Activated CD4-positive, alpha-beta memory T cell treated with anti-CD3 and anti-CD28 coated beads for 36 hours (primary cell): ENCODE measurements at regions of chr11 and their contacts with region 1.

Region 1: GRCh38 chr11:119101759-119102423 is at the start of gene DPAGT1:
- DNase-seq: peak; percentile 92
- H3K4me3 Mint-ChIP-seq: peak within 1 kb of the TSS; percentile 92
- H3K27ac Mint-ChIP-seq: peak within 1 kb of the TSS; percentile 92
- H3K4me1 Mint-ChIP-seq: peaks cover 33% of the 10 kb centered on the region
- H3K27me3 Mint-ChIP-seq: no peaks in the 10 kb centered on the region
- total RNA-seq, gene DPAGT1: 64.4 to 66.9 TPM

Region 2: DNA sequence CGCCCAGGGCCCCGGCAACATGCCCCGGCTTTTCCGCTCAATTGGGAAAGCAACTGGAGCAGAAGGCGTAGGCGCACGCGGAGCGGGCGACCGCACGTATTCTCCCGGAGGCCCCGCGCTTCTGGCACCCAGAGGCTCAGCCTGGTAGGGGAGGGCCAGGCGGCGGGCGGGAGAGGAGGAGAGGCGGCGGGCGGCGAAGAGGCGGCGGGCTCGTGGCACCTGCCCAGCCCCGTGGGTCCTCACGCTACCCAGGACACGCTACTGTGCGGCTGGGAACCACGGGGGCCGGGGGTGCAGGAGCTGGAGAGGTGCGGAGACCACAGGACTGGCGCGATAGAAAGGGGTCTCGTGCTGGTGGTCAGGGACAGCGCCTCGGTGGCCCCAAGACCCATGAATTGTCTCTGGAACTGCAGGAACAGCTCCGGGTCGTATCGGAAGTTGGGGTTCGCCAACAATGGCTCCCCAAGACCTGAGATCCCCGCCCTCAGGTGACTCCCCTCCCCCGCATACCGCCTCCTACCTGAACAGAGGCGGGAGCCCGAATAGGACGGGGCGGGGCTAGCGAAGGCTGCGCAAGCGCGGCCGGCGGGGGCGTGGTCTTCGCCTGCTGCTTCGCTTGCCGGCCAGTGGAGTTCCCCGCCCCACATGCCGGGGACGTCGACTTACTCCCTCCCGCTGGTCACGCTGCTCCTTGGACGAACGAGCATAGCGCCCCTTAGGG is 71.4 kb before region 1 on chr11 and contains the start of gene SLC37A4:
- CTCF ChIA-PET with region 1: interaction called, 3 read pairs
- POLR2A ChIA-PET with region 1: no interaction called
- intact Hi-C with region 1: loop called (anchors 2 kb)
- DNase-seq: peak; percentile 99
- H3K4me3 Mint-ChIP-seq: peak within 1 kb of the TSS; percentile 82
- H3K27ac Mint-ChIP-seq: peak within 1 kb of the TSS; percentile 89
- H3K4me1 Mint-ChIP-seq: peaks cover 18% of the 10 kb centered on the region
- H3K27me3 Mint-ChIP-seq: no peaks in the 10 kb centered on the region
- total RNA-seq, gene SLC37A4: 33.4 to 37.0 TPM

Region 3: GRCh38 chr11:119057000-119057769 is 44.7 kb before region 1 on chr11 and contains the start of gene HYOU1:
- CTCF ChIA-PET with region 1: no interaction called
- POLR2A ChIA-PET with region 1: interaction called, 7 read pairs
- intact Hi-C with region 1: loop called (anchors 1 kb)
- DNase-seq: peak; percentile 99
- H3K4me3 Mint-ChIP-seq: peak within 1 kb of the TSS; percentile 96
- H3K27ac Mint-ChIP-seq: peak within 1 kb of the TSS; percentile 94
- H3K4me1 Mint-ChIP-seq: peaks cover 38% of the 10 kb centered on the region
- H3K27me3 Mint-ChIP-seq: no peaks in the 10 kb centered on the region
- total RNA-seq, gene HYOU1: 127 to 136 TPM

Region 4: DNA sequence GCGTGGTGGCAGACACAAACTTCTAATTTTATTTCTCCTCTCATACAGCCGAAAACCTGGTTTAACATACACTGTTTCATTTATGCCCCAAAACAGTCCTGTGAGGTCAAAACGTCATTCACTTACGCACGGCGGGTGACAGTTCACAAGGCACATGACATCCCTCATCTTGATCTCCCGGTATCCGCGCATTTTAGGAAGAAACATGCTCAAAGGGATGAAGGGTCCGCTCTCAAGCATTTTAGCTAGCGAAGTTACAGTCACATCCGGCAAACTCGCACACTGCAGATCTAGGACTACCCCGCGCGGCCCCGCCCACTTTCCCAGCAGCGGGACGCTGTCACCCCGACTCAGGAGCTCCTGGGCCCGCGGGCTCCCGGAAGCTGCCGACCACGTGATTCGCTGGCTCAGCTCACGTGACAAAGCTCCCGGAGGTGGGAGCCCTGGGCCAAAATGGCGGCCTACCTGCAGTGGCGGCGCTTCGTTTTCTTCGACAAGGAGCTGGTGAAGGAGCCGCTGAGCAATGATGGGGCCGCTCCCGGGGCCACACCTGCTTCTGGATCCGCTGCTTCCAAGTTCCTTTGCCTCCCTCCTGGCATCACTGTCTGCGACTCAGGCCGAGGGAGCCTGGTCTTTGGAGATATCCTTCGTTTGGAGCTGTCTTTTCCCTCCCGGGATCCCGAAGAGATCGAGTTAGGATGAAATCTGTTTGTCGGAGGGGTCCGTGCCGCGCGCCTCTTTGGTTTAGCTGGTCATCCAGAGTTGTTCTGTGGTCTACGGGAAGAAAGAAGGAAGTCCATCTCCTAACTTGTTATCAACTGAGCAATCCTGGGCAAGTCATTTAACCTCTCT is 34.3 kb before region 1 on chr11 and contains the start of gene VPS11:
- CTCF ChIA-PET with region 1: interaction called, 6 read pairs
- POLR2A ChIA-PET with region 1: interaction called, 15 read pairs
- intact Hi-C with region 1: loop called (anchors 1 kb)
- DNase-seq: peak; percentile 99
- H3K4me3 Mint-ChIP-seq: peak within 1 kb of the TSS; percentile 96
- H3K27ac Mint-ChIP-seq: peak within 1 kb of the TSS; percentile 97
- H3K4me1 Mint-ChIP-seq: peaks cover 38% of the 10 kb centered on the region
- H3K27me3 Mint-ChIP-seq: no peaks in the 10 kb centered on the region
- total RNA-seq, gene VPS11: 19.2 to 21.1 TPM

Region 5: GRCh38 chr11:119084663-119085436 is 17.0 kb before region 1 on chr11 and contains the start of gene HMBS:
- CTCF ChIA-PET with region 1: interaction called, 4 read pairs
- POLR2A ChIA-PET with region 1: interaction called, 14 read pairs
- intact Hi-C with region 1: no loop called
- DNase-seq: peak; percentile 93
- H3K4me3 Mint-ChIP-seq: peak within 1 kb of the TSS; percentile 98
- H3K27ac Mint-ChIP-seq: peak within 1 kb of the TSS; percentile 95
- H3K4me1 Mint-ChIP-seq: peaks cover 21% of the 10 kb centered on the region
- H3K27me3 Mint-ChIP-seq: no peaks in the 10 kb centered on the region
- total RNA-seq, gene HMBS: 31.2 to 33.8 TPM

Region 6: DNA sequence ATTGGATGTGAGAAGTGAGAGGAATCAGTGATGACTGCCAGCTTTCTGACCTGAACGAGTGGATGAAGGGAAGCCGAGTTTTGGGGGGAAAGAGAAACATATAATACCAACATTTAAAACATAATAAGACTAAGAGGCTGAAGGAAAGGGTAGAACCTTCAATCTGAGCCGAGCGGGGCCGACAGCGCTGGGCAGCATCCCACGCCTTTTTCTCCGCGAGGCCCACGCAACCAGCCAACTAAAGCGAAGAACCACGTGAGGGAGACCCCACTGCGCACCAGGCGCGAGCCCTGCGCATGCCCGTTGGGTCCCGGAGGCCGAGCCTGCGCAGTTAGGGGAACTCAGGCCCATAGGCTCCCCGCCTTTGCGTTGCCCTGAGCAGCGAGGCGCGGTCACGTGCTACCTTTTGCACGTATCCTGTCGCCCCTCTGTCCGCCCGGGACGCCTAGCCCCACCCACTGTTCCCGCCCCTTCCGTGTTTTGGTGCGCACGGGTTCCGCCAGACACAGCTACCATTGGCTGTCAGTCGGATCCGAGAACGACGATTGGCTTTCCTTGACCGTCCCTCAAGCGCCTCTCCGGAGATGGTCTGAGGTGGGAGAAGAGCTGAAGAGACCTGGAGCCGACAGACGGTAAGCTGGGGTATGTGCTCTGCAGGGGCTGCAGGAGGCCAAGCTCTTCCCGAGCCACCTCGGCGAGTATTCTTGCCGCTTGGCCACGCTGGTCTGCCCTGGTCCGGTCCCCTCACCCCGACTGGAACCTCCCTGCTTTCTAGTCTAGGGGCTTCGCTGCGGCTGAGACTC is 19.3 kb after region 1 on chr11 and contains the start of gene HINFP:
- CTCF ChIA-PET with region 1: interaction called, 4 read pairs
- POLR2A ChIA-PET with region 1: interaction called, 10 read pairs
- intact Hi-C with region 1: loop called (anchors 1 kb)
- DNase-seq: peak; percentile 100
- H3K4me3 Mint-ChIP-seq: peak within 1 kb of the TSS; percentile 88
- H3K27ac Mint-ChIP-seq: peak within 1 kb of the TSS; percentile 78
- H3K4me1 Mint-ChIP-seq: peaks cover 28% of the 10 kb centered on the region
- H3K27me3 Mint-ChIP-seq: no peaks in the 10 kb centered on the region
- total RNA-seq, gene HINFP: 22.3 to 24.3 TPM

Region 7: DNA sequence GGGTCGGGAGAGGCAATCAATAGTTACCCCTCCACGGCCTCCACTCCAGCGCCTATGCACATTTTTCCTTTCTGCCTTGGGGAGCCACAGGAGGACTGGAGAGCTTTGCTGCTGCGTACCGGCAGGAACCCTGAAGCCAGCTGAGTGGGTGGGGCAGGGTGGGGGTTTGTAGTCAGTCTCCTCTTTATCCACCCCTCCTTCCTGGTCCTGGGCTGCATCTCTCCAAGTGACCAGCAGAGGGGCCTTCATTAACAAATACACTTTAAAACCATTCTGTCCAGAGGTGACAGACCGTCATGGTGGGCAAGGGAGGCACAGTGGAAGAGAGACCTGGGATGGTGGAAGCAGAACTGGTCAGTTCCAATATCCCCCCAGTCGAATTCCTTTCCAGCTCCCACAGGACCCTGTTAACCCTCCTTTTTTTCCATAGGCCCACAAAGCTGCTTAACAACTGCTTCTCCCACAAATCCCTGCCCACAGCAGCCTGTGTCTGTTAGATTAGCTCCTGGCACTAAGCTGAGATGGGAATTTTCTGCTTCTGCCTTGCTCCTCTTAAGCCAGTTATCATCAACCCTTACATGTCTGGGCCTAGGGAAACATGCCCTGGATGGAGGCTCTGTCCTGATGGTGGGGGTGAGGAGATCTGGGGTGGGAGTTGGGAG is 43.1 kb after region 1 on chr11:
- CTCF ChIA-PET with region 1: no interaction called
- POLR2A ChIA-PET with region 1: no interaction called
- intact Hi-C with region 1: no loop called
- DNase-seq: peak; percentile 54
- H3K4me3 Mint-ChIP-seq: no peak overlapping the region
- H3K27ac Mint-ChIP-seq: no peak overlapping the region
- H3K4me1 Mint-ChIP-seq: peaks cover 7% of the 10 kb centered on the region
- H3K27me3 Mint-ChIP-seq: peaks cover 24% of the 10 kb centered on the region

Region 8: DNA sequence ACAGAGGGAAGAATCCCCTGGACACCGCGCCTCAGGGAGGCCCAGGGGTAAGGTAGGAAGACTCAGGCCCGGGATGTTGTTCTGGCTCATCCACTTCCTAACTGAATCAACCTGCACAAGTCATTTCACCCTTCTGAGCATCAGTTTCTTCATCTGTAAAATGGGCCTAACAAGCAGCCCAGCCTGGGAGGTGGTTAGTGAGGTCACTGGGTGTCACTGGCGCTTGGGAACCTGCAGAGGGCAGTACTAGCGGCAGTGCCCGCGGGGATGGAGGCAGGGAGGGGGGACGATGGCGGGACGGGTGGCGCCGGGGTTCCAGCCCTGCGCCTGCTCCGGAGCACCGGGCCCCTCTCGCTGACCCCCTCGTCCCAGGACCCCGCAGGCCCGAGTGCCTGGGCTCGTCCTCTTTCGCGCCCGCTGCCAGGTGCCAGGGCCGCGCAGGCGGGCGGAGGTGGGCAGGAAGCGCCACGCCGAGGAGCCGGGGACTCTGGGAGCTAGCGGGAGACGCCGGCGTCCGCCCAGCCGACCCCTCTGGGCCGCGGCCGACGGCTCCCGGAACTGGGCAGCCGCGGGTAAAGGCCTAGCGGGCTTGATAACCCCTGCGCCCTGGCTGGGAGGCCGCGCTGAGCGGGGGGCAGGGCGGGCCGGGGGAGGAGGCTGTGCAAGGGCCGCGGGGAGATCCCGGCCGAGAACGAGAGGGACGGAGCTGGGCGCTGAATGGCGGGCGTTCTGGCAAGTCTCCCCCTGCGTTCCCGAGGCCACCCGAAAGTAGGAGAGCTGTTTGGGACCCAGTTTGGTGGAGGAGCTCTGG is 66.8 kb after region 1 on chr11 and contains the start of gene NLRX1:
- CTCF ChIA-PET with region 1: interaction called, 9 read pairs
- POLR2A ChIA-PET with region 1: interaction called, 6 read pairs
- intact Hi-C with region 1: loop called (anchors 5 kb)
- DNase-seq: peak; percentile 91
- H3K4me3 Mint-ChIP-seq: peak within 1 kb of the TSS; percentile 89
- H3K27ac Mint-ChIP-seq: peak within 1 kb of the TSS; percentile 82
- H3K4me1 Mint-ChIP-seq: peaks cover 11% of the 10 kb centered on the region
- H3K27me3 Mint-ChIP-seq: no peaks in the 10 kb centered on the region
- total RNA-seq, gene NLRX1: 18.4 to 18.7 TPM